Activated CD4-positive, alpha-beta T cell treated with anti-CD3 and anti-CD28 coated beads for 36 hours (primary cell): ENCODE measurements at regions of chr1 and their contacts with region 1.

Region 1: GRCh38 chr1:183543619-183544204 is 46.5 kb downstream of the NCF2 start:
- DNase-seq: no peak
- ATAC-seq: peak; percentile 91
- H3K4me3 Mint-ChIP-seq: no peak overlapping the region
- H3K27ac Mint-ChIP-seq: peak overlapping the region; percentile 63
- H3K4me1 Mint-ChIP-seq: peaks cover 2% of the 10 kb centered on the region
- H3K27me3 Mint-ChIP-seq: no peaks in the 10 kb centered on the region

Region 2: DNA sequence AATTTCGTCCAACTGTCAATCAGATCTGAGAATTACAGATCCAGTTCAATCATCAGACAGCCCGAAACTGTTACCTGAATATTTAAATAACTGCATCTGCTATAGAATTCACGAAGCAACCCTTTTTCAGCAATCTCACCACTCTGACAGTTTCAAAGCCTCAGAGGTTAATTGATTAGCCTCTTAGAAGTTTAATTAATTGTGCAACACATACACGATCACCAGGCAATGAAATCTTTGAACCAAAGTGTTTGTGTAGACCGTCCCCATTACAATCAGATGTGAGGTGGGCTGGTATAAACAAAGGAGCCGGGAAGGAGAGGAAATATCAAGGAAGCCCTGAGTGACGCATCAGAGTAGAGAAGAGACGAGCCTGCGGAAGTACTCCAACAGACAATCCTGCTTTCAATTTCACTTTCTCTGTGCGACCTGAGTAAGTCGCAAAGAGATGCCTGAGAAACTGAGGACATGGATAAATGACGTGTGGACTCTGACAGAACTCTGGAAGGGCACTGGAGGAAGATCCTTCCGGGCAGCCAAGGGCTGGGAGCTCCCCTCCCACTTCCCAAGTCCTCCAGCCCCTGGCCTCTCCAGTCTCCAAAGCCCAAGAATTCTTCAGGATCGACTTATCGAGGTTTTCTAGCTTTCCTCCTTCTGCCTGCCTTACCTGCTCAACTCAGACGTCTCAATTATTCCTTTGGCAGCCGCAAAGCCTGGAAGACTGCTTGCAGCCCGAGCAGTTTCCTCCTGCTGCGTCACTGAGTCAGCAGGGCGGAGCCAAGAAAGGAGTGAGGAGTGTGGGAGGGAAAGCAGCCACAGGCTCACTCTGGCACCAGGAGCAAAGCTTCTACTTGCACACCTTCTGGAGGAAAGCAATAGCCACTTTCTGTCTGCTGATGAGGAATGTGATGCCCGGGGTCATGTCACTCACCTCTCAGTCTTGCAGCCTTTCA is 954.9 kb before region 1 on chr1 and contains the start of gene RNASEL:
- CTCF ChIA-PET with region 1: no interaction called
- POLR2A ChIA-PET with region 1: no interaction called
- intact Hi-C with region 1: no loop called
- DNase-seq: peak; percentile 74
- ATAC-seq: peak; percentile 92
- H3K4me3 Mint-ChIP-seq: peak within 1 kb of the TSS; percentile 89
- H3K27ac Mint-ChIP-seq: peak within 1 kb of the TSS; percentile 99
- H3K4me1 Mint-ChIP-seq: peaks cover 45% of the 10 kb centered on the region
- H3K27me3 Mint-ChIP-seq: no peaks in the 10 kb centered on the region
- total RNA-seq, gene RNASEL: 3.7 to 4.0 TPM

Region 3: GRCh38 chr1:182877842-182878241 is 665.9 kb before region 1 on chr1:
- CTCF ChIA-PET with region 1: no interaction called
- POLR2A ChIA-PET with region 1: no interaction called
- intact Hi-C with region 1: loop called in 1 of 2 experiments (anchors 10 kb)
- DNase-seq: peak; percentile 61
- ATAC-seq: peak; percentile 75
- H3K4me3 Mint-ChIP-seq: no peak overlapping the region
- H3K27ac Mint-ChIP-seq: peak overlapping the region; percentile 78
- H3K4me1 Mint-ChIP-seq: peaks cover 38% of the 10 kb centered on the region
- H3K27me3 Mint-ChIP-seq: no peaks in the 10 kb centered on the region

Region 4: DNA sequence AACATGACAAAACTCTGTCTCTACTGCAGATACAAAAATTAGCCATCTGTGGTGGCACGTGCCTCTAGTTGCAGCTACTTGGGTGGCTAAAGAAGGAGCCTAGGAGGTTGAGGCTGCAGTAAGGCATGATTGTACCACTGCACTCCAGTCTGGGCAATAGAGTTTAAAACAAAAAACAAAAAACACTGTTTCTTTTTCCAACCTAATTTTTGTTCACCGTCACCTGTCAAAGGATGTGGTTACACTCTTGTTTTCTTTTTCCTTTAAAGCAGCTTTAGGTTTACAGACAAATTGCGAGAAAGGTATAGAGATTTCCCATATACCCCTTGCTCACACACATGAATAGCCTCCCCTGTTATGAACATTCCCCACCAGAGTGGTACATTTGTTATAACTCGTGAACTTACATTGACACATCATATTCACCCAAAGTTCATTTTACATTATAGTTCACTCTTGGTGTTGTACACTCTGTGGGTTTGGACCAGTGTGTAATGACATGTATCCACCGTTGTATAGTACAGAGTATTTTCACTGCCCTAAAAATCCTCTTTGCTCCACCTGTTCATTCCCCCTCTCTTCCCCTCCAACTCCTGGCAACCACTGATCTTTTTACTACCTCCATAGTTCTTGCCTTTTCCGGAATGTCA is 45.2 kb before region 1 on chr1:
- CTCF ChIA-PET with region 1: no interaction called
- POLR2A ChIA-PET with region 1: no interaction called
- intact Hi-C with region 1: no loop called
- DNase-seq: peak; percentile 14
- ATAC-seq: peak; percentile 86
- H3K4me3 Mint-ChIP-seq: no peak overlapping the region
- H3K27ac Mint-ChIP-seq: peak overlapping the region; percentile 73
- H3K4me1 Mint-ChIP-seq: peaks cover 62% of the 10 kb centered on the region
- H3K27me3 Mint-ChIP-seq: no peaks in the 10 kb centered on the region

Region 5: DNA sequence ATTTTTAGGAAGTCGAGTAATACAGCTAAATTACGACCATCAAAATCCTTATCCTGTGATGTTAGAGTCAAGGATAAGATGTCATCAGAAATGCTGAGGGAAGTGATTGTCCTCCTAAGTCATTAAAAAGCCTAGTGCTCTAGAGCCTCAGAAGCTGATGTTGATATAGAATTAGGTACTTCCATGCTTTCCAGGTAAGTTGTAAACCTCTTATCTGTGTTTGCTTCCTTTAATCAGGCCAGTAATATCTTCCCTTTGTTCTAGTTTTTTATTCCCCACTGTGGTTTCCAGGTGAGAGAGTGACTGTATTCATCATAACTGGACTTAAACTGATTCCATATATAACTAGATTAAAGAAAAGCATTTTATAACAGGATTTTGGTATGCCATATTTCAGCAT is 27.0 kb before region 1 on chr1:
- CTCF ChIA-PET with region 1: interaction called, 3 read pairs
- POLR2A ChIA-PET with region 1: no interaction called
- intact Hi-C with region 1: loop called in 1 of 2 experiments (anchors 1 kb)
- DNase-seq: no peak
- ATAC-seq: no peak
- H3K4me3 Mint-ChIP-seq: no peak overlapping the region
- H3K27ac Mint-ChIP-seq: no peak overlapping the region
- H3K4me1 Mint-ChIP-seq: peaks cover 18% of the 10 kb centered on the region
- H3K27me3 Mint-ChIP-seq: no peaks in the 10 kb centered on the region

Region 6: DNA sequence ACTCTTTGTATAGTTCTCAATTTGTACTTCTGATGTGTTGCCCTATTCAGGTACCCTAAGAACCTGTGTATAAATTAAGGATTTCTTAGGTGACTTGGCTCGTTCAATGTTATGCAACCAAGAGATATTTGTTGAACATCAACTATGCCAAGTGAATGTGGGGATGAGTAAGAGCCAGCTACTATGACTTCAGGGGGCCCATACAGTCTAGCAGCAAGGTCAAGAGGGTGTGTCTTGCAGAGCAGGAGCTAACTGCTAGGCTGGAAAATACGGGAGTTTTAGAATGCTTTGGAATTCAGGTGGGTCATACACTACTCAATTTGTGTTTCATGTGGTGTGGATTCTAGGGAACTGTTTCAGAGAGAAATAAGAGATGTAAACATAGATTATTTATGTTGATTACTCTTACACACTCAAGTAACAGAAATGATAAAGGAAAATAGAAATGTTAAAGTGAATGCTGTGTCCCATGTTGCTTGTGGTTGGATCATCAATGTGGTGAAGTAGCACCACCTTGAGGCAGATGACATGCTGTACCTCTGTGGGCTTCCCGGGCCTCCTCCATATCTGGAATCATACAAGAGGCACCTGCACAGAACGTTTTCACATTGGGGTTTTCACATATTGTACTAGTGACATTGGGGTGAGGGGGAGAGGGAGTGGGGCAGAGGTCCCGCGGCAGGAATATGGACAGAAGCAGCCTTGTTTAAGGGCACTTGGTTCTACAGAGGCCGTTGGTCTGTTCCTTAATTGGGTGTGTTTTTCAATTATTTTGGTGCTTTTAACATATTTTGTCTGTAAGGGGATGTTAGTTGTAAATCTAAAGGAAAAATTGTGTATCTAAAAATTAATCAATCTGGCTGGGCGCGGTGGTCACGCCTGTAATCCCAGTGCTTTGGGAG is 79.4 kb after region 1 on chr1:
- CTCF ChIA-PET with region 1: interaction called, 3 read pairs
- POLR2A ChIA-PET with region 1: no interaction called
- intact Hi-C with region 1: loop called (anchors 2 to 5 kb)
- DNase-seq: peak; percentile 71
- ATAC-seq: peak; percentile 97
- H3K4me3 Mint-ChIP-seq: no peak overlapping the region
- H3K27ac Mint-ChIP-seq: peak overlapping the region; percentile 22
- H3K4me1 Mint-ChIP-seq: peaks cover 17% of the 10 kb centered on the region
- H3K27me3 Mint-ChIP-seq: no peaks in the 10 kb centered on the region